ENCODE measurements at regions of chr14 and their contacts with region 1.

Region 1: GRCh38 chr14:102917469-102918211 is 4.8 kb upstream of the AMN start:
- DNase-seq: peak; percentile 38 to 92
- H3K4me3 ChIP-seq: no peak overlapping the region
- H3K27ac ChIP-seq: no peak overlapping the region
- H3K4me1 ChIP-seq: peaks cover 0 to 3% (median 0%) of the 10 kb centered on the region in 4 experiments; a peak in 3 of 7 replicates
- H3K27me3 ChIP-seq: peaks cover 0 to 10% (median 9%) of the 10 kb centered on the region in 4 experiments; a peak in 5 of 7 replicates
- CTCF ChIP-seq: peak in 2 of 3 experiments; percentile 83 to 87; a peak in 3 of 4 replicates
- EP300 ChIP-seq: no peak
- POLR2A ChIP-seq: no peak
- RAD21 ChIP-seq: peak; percentile 90 to 94

Region 2: GRCh38 chr14:102785584-102785942 is 132.1 kb before region 1 on chr14:
- CTCF ChIA-PET with region 1: interaction called, 18 read pairs
- POLR2A ChIA-PET with region 1: no interaction called
- DNase-seq: no peak
- H3K4me3 ChIP-seq: no peak overlapping the region
- H3K27ac ChIP-seq: no peak overlapping the region
- H3K4me1 ChIP-seq: 0 out of 7 replicates have a peak, but pooled peaks cover 0 to 3% (median 0%) of the 10 kb centered on the region in 4 experiments
- H3K27me3 ChIP-seq: no peaks in the 10 kb centered on the region
- CTCF ChIP-seq: peak; percentile 29 to 50 (median 36)
- EP300 ChIP-seq: no peak
- POLR2A ChIP-seq: no peak
- RAD21 ChIP-seq: peak; percentile 65 to 72

Measured in H1 (cell line).